ENCODE measurements at regions of chr6 and their contacts with region 1.

Region 1: DNA sequence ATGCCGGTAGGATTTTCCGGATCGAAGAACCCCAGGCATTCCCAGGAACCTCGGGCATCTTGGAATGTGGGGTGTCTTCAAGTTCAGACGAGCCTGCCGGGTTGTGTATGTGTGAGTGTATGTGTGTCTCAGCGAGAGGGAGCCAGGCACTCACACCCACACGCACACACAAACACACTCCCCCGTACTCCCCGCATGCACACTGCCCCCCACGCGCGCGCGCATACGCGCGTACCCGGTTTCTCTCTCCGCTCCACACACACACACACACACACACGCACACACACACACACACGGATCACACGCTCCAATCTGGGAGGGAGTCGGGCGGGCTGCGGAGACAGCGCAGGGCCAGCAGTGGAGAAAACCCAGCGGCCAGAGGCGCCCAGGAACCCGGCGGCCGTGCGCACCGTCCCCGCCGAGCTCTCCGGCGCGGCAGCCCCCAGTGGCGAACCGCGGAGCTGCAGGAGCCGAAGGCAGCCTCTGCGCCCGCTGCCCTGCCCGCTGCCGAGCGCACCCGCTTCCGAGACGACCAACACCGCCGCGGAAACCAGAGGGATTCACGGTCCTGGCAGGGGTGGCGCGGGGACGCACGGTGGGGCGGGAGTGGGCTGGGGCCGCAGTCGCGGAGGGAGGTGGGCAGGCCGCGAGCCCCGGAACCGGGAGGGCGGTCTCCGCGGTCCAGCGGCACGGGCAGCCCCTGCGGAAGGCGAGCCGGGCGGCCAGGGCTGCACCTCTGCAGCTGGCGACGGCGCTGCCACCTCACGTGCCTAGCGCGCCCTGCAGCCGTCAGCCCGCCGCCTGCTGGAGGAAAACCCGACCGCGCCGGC is at the start of gene LRFN2:
- DNase-seq: peak; percentile 39 to 76
- ATAC-seq: peak; percentile 95 to 99
- H3K4me3 ChIP-seq: peak within 1 kb of the TSS; percentile 60
- H3K27ac ChIP-seq: peak within 1 kb of the TSS; percentile 75 to 88; a peak in 5 of 6 replicates
- H3K4me1 ChIP-seq: no peaks in the 10 kb centered on the region
- CTCF ChIP-seq: peak; percentile 39
- EP300 ChIP-seq: no peak
- POLR2A ChIP-seq: no peak
- RAD21 ChIP-seq: peak in 1 of 2 experiments; percentile 35; a peak in 2 of 5 replicates
- polyA plus RNA-seq, gene LRFN2: not detected in 2 replicates

Region 2: DNA sequence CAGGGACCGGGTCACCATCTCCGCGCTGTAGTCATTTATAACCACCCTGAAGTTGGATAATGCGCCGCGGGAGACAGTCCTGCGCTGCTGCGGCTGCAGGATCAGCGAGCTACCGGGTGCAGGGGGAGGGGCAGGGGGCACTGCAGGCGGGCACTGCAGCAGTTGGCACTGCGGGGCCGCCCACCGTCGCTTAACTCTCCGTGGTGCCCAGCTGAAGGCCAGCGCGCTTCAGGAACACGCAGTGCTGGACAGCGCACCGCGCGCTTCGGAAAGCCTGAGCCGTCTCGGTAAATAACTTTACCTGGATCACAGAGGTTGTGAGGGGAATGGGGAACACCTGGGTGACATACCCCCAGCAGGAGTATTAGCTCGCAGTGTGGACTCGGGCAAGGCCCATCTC is 12.1 kb after region 1 on chr6:
- CTCF ChIA-PET with region 1: interaction called, 12 read pairs
- POLR2A ChIA-PET with region 1: no interaction called
- DNase-seq: no peak
- ATAC-seq: no peak
- H3K4me3 ChIP-seq: no peak overlapping the region
- H3K27ac ChIP-seq: no peak overlapping the region
- H3K4me1 ChIP-seq: no peaks in the 10 kb centered on the region
- CTCF ChIP-seq: no peak
- EP300 ChIP-seq: no peak
- POLR2A ChIP-seq: no peak
- RAD21 ChIP-seq: no peak

Region 3: GRCh38 chr6:40743226-40743625 is 155.8 kb after region 1 on chr6:
- CTCF ChIA-PET with region 1: no interaction called
- POLR2A ChIA-PET with region 1: no interaction called
- DNase-seq: no peak
- ATAC-seq: no peak
- H3K4me3 ChIP-seq: no peak overlapping the region
- H3K27ac ChIP-seq: no peak overlapping the region
- H3K4me1 ChIP-seq: no peaks in the 10 kb centered on the region
- CTCF ChIP-seq: no peak
- EP300 ChIP-seq: no peak
- POLR2A ChIP-seq: no peak
- RAD21 ChIP-seq: no peak